Heart right ventricle (tissue), 16 donors: ENCODE measurements at regions of chr3 and their contacts with region 1.

Region 1: DNA sequence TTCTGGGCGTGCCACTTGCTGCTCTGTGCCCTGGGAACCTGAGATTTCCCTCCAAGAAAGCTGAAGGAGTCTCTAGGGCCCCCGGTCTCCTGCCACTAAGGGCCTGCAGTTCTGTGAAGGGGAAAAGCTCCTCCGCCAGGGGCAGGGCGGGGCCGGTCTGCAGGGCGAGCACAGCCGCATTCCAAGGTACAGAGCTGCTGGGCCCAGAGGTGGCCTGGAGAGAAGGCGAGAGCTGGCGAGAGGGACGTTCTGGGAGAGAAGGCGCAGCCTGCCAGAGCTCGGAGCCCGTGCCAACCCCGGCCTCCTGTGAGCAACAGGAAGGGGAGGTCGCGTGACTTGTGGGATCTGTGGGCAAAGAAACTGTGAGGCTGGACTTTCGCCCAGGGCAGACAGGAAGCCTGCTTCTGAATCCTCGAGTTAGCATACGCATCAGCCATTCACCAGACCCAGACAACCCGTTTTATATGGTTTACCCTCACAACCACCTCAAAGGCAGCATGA is 500.4 kb downstream of the SHQ1 start:
- DNase-seq: peak; percentile 74 to 77
- ATAC-seq: peak; percentile 55 to 82 (median 79)
- H3K4me3 ChIP-seq: peak overlapping the region in 1 of 10 donors; percentile 11
- H3K27ac ChIP-seq: peak overlapping the region in 7 of 10 donors; percentile 7 to 48 (median 23)
- H3K4me1 ChIP-seq: peaks cover 0 to 45% (median 19%) of the 10 kb centered on the region in 9 donors
- H3K27me3 ChIP-seq: no peaks in the 10 kb centered on the region
- CTCF ChIP-seq: peak in 3 of 9 donors; percentile 21 to 27 (median 21)

Region 2: GRCh38 chr3:72418244-72418643 is 70.4 kb after region 1 on chr3:
- intact Hi-C with region 1: loop called in 1 of 10 experiments (anchors 2 kb)
- DNase-seq: no peak
- ATAC-seq: no peak
- H3K4me3 ChIP-seq: no peak overlapping the region
- H3K27ac ChIP-seq: no peak overlapping the region
- H3K4me1 ChIP-seq: peaks cover 0 to 51% (median 10%) of the 10 kb centered on the region in 9 donors
- H3K27me3 ChIP-seq: no peaks in the 10 kb centered on the region
- CTCF ChIP-seq: no peak

Region 3: DNA sequence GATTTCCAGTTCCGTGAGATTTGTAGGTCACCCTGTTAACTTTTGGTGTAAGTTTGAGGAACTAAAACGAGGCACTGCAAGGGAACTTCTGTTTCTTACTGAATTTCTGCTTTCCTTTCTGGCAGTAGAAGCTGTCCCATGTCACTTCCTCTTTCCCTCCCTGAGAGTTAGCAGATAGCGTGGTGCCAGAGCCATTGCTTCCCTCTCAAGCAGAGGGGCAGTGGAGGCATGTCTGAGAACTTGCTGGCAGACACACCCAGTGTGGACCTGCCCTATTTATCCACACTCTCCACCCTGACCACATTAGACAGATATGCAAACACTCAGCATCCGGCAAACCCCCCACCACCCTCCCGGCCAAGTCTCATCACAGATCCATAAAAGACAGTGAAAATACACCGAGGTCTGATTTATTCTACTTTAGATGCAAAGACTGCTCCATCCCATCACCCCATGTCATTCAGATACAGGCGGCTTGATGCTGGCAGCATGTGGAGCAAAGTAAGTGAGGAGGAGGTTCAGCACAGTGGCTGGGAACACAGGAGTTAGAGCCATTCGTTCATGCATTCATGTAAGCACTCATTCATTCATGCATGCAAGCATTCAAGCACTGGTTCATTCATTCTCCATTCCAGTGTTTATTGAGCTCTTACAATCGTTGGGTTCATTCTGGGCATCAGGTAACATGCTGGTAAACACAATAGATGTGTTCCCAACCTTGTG is 175.7 kb after region 1 on chr3:
- intact Hi-C with region 1: no loop called
- DNase-seq: peak; percentile 14 to 18
- ATAC-seq: peak; percentile 49 to 80 (median 70)
- H3K4me3 ChIP-seq: no peak overlapping the region
- H3K27ac ChIP-seq: peak overlapping the region in 1 of 10 donors; percentile 81
- H3K4me1 ChIP-seq: peaks cover 0 to 26% (median 5%) of the 10 kb centered on the region in 9 donors
- H3K27me3 ChIP-seq: no peaks in the 10 kb centered on the region
- CTCF ChIP-seq: no peak